Gastrocnemius medialis (tissue), 4 donors: ENCODE measurements at regions of chr3 and their contacts with region 1.

Region 1: GRCh38 chr3:151439652-151440129 is 21.2 kb downstream of the IGSF10 start:
- DNase-seq: no peak
- ATAC-seq: peak in 1 of 2 donors; percentile 53
- H3K4me3 ChIP-seq: no peak overlapping the region
- H3K27ac ChIP-seq: no peak overlapping the region
- H3K4me1 ChIP-seq: no peaks in the 10 kb centered on the region
- H3K27me3 ChIP-seq: no peaks in the 10 kb centered on the region
- CTCF ChIP-seq: peak; percentile 28 to 81 (median 68)
- POLR2A ChIP-seq: no peak

Region 2: GRCh38 chr3:151558661-151559060 is 119.0 kb after region 1 on chr3:
- in situ Hi-C with region 1: no loop called
- intact Hi-C with region 1: no loop called
- DNase-seq: no peak
- ATAC-seq: no peak
- H3K4me3 ChIP-seq: no peak overlapping the region
- H3K27ac ChIP-seq: no peak overlapping the region
- H3K4me1 ChIP-seq: no peaks in the 10 kb centered on the region
- H3K27me3 ChIP-seq: no peaks in the 10 kb centered on the region
- CTCF ChIP-seq: no peak
- POLR2A ChIP-seq: no peak

Region 3: GRCh38 chr3:151838583-151839312 is 399.1 kb after region 1 on chr3:
- in situ Hi-C with region 1: loop called (anchors 5 to 10 kb)
- intact Hi-C with region 1: loop called (anchors 1 kb)
- DNase-seq: no peak
- ATAC-seq: peak in 1 of 2 donors; percentile 73
- H3K4me3 ChIP-seq: peak overlapping the region in 2 of 4 donors; percentile 20 to 32
- H3K27ac ChIP-seq: no peak overlapping the region
- H3K4me1 ChIP-seq: peaks cover 0 to 5% of the 10 kb centered on the region in 2 donors
- H3K27me3 ChIP-seq: no peaks in the 10 kb centered on the region
- CTCF ChIP-seq: peak; percentile 57 to 76 (median 65)
- POLR2A ChIP-seq: no peak

Region 4: DNA sequence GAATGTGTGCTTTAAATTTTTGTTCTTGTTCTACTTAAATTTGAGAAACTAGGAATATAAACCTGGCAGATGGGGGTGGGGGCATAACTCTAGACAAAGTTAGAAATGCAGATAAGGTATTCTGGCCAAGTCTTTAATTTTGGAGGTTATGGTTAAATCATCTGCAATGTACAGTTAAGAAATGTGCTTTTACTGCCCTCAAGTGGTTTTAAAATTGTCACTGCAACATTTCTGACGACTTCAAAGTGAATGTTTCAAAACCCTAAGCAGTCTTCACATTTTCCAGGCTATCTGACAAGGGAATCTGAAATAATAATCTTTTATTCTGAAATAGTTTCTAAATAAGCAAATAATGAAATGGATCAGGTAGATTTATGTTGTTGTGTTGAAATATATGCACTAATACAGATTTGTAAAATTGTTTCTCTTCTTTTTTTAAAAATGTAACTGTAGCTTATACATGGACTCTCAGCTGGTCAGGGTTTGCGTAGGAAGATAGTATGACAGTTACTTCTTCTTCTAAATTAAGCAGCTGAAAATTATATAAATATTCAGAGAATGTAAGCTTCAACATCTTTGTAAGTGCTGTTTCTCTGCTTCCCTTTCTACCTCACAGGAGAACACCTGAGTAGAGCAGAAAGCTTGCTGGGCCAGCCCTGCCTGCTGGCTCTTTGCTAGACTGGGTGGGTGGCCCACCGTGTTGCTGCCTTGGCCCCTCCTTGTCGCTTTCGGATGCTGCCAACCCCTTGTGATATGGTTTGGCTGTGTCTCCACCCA is 478.8 kb after region 1 on chr3:
- in situ Hi-C with region 1: loop called in 1 of 4 experiments (anchors 10 kb)
- intact Hi-C with region 1: loop called (anchors 2 kb)
- DNase-seq: no peak
- ATAC-seq: no peak
- H3K4me3 ChIP-seq: no peak overlapping the region
- H3K27ac ChIP-seq: no peak overlapping the region
- H3K4me1 ChIP-seq: no peaks in the 10 kb centered on the region
- H3K27me3 ChIP-seq: no peaks in the 10 kb centered on the region
- CTCF ChIP-seq: peak in 4 of 5 experiments; percentile 12 to 51 (median 28)
- POLR2A ChIP-seq: no peak